Ovary (tissue), 10 donors: ENCODE measurements at regions of chr4 and their contacts with region 1.

Region 1: GRCh38 chr4:15001869-15002658 is at the start of gene CPEB2:
- DNase-seq: peak; percentile 96 to 97 (median 96)
- H3K4me3 ChIP-seq: peak within 1 kb of the TSS; percentile 98
- H3K27ac ChIP-seq: peak within 1 kb of the TSS; percentile 92 to 100
- H3K4me1 ChIP-seq: no peaks in the 10 kb centered on the region
- H3K27me3 ChIP-seq: no peaks in the 10 kb centered on the region
- CTCF ChIP-seq: peak in 1 of 3 donors; percentile 22
- EP300 ChIP-seq: peak; percentile 33
- POLR2A ChIP-seq: peak; percentile 97
- total RNA-seq, gene CPEB2: 9.9 to 18.6 (median 14.5) TPM

Region 2: GRCh38 chr4:13640149-13640940 is 1361.7 kb before region 1 on chr4:
- intact Hi-C with region 1: loop called in 1 of 4 experiments (anchors 10 kb)
- DNase-seq: no peak
- H3K4me3 ChIP-seq: no peak overlapping the region
- H3K27ac ChIP-seq: no peak overlapping the region
- H3K4me1 ChIP-seq: peaks cover 11% of the 10 kb centered on the region
- H3K27me3 ChIP-seq: no peaks in the 10 kb centered on the region
- CTCF ChIP-seq: no peak
- EP300 ChIP-seq: no peak
- POLR2A ChIP-seq: no peak

Region 3: GRCh38 chr4:15020502-15021286 is 18.6 kb after region 1 on chr4:
- intact Hi-C with region 1: no loop called
- DNase-seq: no peak
- H3K4me3 ChIP-seq: no peak overlapping the region
- H3K27ac ChIP-seq: no peak overlapping the region
- H3K4me1 ChIP-seq: peaks cover 4% of the 10 kb centered on the region
- H3K27me3 ChIP-seq: no peaks in the 10 kb centered on the region
- CTCF ChIP-seq: no peak
- EP300 ChIP-seq: no peak
- POLR2A ChIP-seq: no peak

Region 4: GRCh38 chr4:15149839-15150476 is 147.9 kb after region 1 on chr4:
- intact Hi-C with region 1: loop called in 1 of 4 experiments (anchors 10 kb)
- DNase-seq: peak; percentile 71 to 81 (median 75)
- H3K4me3 ChIP-seq: no peak overlapping the region
- H3K27ac ChIP-seq: peak overlapping the region in 1 of 2 donors; percentile 51
- H3K4me1 ChIP-seq: peaks cover 20% of the 10 kb centered on the region
- H3K27me3 ChIP-seq: no peaks in the 10 kb centered on the region
- CTCF ChIP-seq: no peak
- EP300 ChIP-seq: no peak
- POLR2A ChIP-seq: no peak

Region 5: DNA sequence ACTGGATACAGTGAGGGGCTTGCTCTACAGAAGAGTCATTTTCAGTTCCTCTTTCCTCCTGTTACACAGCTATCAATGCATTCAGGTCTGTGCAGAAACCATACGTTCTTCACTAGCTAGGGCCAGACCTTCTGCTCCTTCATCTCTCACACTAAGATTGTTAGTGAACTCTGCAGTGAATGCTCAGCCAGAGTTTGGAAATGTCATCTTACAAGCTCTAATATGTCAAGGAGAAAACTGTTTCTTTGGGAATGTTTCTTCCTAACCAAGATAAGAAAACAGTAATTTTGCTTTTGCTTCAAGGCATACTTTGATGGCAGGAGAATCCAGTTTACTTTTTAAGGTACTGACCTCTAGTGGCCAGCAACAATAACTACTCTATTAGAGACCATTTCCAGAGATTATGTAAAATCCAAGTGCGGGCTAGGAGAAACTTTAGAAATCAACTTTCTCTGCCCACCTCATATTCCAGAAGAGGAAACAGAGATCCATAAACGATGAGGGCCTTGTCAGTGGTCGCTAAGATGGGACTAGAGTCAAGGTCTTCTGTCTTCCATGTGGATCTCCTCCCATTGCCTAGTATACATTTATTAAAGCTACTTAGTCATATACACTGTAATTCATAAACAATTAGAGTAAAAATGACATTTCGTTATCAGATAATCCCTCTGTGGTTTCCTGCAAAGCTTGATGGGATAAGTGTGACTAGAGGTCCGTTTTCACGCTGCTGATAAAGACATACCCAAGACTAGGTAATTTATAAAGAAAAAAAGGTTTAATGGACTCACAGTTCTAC is 455.5 kb after region 1 on chr4:
- intact Hi-C with region 1: loop called in 1 of 4 experiments (anchors 10 kb)
- DNase-seq: no peak
- H3K4me3 ChIP-seq: no peak overlapping the region
- H3K27ac ChIP-seq: peak overlapping the region in 1 of 2 donors; percentile 2
- H3K4me1 ChIP-seq: peaks cover 5% of the 10 kb centered on the region
- H3K27me3 ChIP-seq: no peaks in the 10 kb centered on the region
- CTCF ChIP-seq: peak; percentile 56 to 81 (median 74)
- EP300 ChIP-seq: peak; percentile 24
- POLR2A ChIP-seq: no peak

Region 6: GRCh38 chr4:15655229-15656037 is 653.4 kb after region 1 on chr4 and contains the start of gene FBXL5:
- intact Hi-C with region 1: loop called in 2 of 4 experiments (anchors 2 to 10 kb)
- DNase-seq: peak; percentile 76 to 88 (median 82)
- H3K4me3 ChIP-seq: peak within 1 kb of the TSS; percentile 61
- H3K27ac ChIP-seq: peak within 1 kb of the TSS; percentile 98 to 100
- H3K4me1 ChIP-seq: peaks cover 5% of the 10 kb centered on the region
- H3K27me3 ChIP-seq: no peaks in the 10 kb centered on the region
- CTCF ChIP-seq: no peak
- EP300 ChIP-seq: no peak
- POLR2A ChIP-seq: peak; percentile 80
- total RNA-seq, gene FBXL5: 68.7 to 103 (median 90.4) TPM